ENCODE measurements at regions of chr5 and their contacts with region 1.

Region 1: DNA sequence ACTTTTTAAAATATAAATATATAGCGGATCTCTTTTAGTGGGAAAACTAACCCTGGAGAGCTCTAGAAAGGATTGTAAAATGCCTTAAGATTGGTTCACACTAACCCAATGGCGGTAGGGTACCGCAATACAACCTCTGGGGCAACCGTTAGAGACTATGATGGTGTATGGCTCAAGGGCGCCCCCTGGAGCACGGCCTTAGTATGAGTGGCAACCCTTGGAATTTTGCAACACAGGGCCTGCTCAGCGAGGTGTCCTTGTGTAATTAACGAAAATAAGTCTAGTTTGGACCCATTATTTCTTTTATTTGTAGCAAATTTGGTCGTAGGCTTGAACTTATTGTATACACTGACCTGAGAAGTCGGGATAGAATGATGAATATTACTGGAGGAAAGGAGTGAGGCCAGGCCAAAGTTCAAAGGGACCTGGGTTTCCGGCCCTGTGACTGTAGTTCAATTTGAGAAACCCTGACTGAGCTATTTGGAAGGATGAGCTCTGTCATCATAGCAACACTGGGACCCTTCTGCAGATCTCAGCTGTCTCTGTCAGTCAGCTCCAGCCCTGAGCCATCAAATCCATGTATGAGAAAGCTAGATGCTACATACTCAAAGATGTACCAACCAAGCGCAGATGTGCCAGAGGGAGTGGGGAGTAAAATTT is 54.8 kb downstream of the CAMK4 start:
- DNase-seq: peak; percentile 39
- ATAC-seq: peak; percentile 76
- H3K4me3 Mint-ChIP-seq: no peak overlapping the region
- H3K27ac Mint-ChIP-seq: no peak overlapping the region
- H3K4me1 Mint-ChIP-seq: no peaks in the 10 kb centered on the region
- H3K27me3 Mint-ChIP-seq: no peaks in the 10 kb centered on the region
- CTCF ChIP-seq: no peak

Region 2: DNA sequence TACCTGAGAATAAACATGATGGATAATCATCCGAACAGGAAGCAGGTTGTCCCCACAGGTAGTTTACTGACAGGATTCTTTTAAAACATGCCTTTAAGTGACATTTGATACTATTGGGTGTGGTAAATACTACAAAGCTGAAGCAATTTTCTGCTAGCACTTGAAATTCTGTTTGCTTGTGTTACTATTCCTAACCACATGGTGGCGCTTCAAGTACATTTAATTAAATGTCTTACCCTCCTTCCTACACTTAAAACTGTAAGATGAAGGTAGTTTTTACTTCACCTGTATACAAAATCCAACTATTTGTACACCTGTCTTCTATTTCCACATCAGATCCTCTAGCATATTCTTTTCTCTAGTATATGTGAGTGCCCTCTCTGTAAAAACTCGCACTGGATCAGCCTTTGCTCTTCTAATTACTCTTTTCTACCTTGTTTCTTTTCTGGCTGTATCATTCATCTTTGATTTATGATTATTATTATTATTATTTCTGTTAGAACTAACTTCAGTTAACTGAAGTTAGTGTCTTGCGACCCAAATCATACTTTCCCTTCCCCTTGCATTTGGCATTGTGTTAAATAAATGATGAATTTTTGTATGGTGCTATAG is 521.8 kb before region 1 on chr5:
- CTCF ChIA-PET with region 1: no interaction called
- POLR2A ChIA-PET with region 1: no interaction called
- intact Hi-C with region 1: loop called (anchors 2 kb)
- DNase-seq: no peak
- ATAC-seq: no peak
- H3K4me3 Mint-ChIP-seq: no peak overlapping the region
- H3K27ac Mint-ChIP-seq: no peak overlapping the region
- H3K4me1 Mint-ChIP-seq: peaks cover 9% of the 10 kb centered on the region
- H3K27me3 Mint-ChIP-seq: no peaks in the 10 kb centered on the region
- CTCF ChIP-seq: peak; percentile 65

Region 3: DNA sequence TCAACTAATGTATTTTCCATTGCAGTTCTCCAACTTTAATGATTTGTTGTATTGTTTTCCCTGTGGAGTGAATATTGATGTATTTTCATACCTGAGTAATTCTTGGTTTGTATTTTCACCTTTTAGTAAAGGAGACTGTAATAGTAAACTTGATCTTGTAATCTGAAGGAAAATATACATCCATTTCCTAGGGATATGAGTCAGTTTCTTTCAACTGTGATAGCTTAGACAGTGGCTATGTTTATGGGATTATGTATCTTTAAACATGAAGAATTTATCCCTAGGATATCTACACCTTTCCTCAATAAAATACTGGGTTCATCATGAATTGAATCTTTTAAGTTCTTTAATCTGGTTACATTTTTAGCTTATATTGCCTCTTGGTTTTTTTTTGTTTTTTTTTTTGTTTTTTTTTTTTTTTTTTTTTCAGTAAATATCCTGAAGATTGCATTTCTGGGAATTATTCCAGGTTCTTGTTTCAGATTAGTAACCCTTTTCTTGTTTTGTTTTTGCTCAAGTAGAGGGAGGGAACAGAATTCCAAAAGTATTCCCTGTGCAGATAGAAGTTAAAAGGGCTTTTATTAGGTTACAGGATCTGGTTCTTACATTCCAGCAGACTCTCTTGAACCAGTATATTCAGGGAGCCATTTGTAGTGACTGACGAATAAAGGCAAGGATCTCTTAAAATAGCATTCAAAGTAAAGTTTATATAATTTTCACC is 179.8 kb before region 1 on chr5:
- CTCF ChIA-PET with region 1: no interaction called
- POLR2A ChIA-PET with region 1: no interaction called
- intact Hi-C with region 1: no loop called
- DNase-seq: no peak
- ATAC-seq: no peak
- H3K4me3 Mint-ChIP-seq: no peak overlapping the region
- H3K27ac Mint-ChIP-seq: no peak overlapping the region
- H3K4me1 Mint-ChIP-seq: peaks cover 8% of the 10 kb centered on the region
- H3K27me3 Mint-ChIP-seq: no peaks in the 10 kb centered on the region
- CTCF ChIP-seq: no peak

Region 4: GRCh38 chr5:111158105-111158744 is 120.8 kb before region 1 on chr5:
- CTCF ChIA-PET with region 1: interaction called, 8 read pairs
- POLR2A ChIA-PET with region 1: no interaction called
- intact Hi-C with region 1: loop called (anchors 1 kb)
- DNase-seq: no peak
- ATAC-seq: peak; percentile 49
- H3K4me3 Mint-ChIP-seq: no peak overlapping the region
- H3K27ac Mint-ChIP-seq: no peak overlapping the region
- H3K4me1 Mint-ChIP-seq: no peaks in the 10 kb centered on the region
- H3K27me3 Mint-ChIP-seq: peaks cover 10% of the 10 kb centered on the region
- CTCF ChIP-seq: peak; percentile 99

Region 5: GRCh38 chr5:111223889-111224563 is 54.9 kb before region 1 on chr5 and contains the start of gene CAMK4:
- CTCF ChIA-PET with region 1: no interaction called
- POLR2A ChIA-PET with region 1: no interaction called
- intact Hi-C with region 1: loop called (anchors 2 kb)
- DNase-seq: peak; percentile 52
- ATAC-seq: peak; percentile 88
- H3K4me3 Mint-ChIP-seq: peak within 1 kb of the TSS; percentile 82
- H3K27ac Mint-ChIP-seq: no peak within 1 kb of the TSS
- H3K4me1 Mint-ChIP-seq: peaks cover 20% of the 10 kb centered on the region
- H3K27me3 Mint-ChIP-seq: peaks cover 16% of the 10 kb centered on the region
- CTCF ChIP-seq: no peak
- total RNA-seq, gene CAMK4: 5.1 and 6.3 TPM in 2 replicates

Measured in activated B cell treated with CpG ODN at 0.5 μM for 24 hours (primary cell).